Activated CD4-positive, alpha-beta T cell treated with anti-CD3 and anti-CD28 coated beads, Interleukin-2, amount 10 ng/mL, durations not matched to agents 24 days and 14 days (primary cell): ENCODE measurements at regions of chr5 and their contacts with region 1.

Region 1: GRCh38 chr5:56126487-56127179 is 106.5 kb downstream of the ANKRD55 start:
- DNase-seq: no peak
- H3K4me3 Mint-ChIP-seq: peak overlapping the region; percentile 72
- H3K27ac Mint-ChIP-seq: peak overlapping the region; percentile 93
- H3K4me1 Mint-ChIP-seq: peaks cover 47% of the 10 kb centered on the region
- H3K27me3 Mint-ChIP-seq: no peaks in the 10 kb centered on the region

Region 2: GRCh38 chr5:56105511-56106291 is 20.9 kb before region 1 on chr5:
- intact Hi-C with region 1: loop called (anchors 2 kb)
- DNase-seq: no peak
- H3K4me3 Mint-ChIP-seq: peak overlapping the region; percentile 59
- H3K27ac Mint-ChIP-seq: peak overlapping the region; percentile 74
- H3K4me1 Mint-ChIP-seq: peaks cover 45% of the 10 kb centered on the region
- H3K27me3 Mint-ChIP-seq: no peaks in the 10 kb centered on the region

Region 3: DNA sequence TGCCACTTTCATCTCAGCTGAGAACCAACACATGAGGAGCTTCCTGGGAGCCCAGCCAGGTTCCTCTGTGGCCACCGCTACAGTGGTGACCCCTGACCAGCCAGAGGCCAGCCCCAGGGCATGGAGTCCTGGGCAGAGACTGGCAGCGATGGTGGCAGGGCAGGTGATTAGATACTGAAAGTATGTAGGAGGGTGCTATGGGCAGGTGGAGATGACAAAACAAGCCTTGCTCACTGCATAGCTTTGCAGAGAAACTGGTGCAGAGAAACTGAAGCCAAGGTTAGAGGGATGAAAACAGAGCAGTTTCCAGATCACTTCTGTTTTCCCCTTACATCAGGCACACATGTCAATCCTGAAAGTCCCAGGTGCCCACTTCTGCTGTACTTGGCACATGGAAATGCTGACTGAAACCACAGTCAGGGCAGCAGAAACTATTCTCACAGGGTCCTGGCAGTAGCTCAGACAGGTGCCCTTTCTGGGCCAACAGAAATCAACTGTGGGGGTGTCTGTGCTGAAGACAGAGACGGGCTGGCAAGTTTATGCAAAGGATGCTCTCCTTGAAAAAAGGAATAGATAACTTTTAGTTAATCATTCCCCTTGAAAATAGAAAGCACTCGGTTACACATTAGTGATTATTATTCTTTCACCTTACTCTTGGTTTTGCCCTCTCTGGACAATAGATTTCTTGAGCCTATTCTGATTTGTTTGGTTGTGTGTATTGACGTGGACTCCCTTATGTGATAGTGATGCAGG is 16.2 kb after region 1 on chr5:
- intact Hi-C with region 1: loop called (anchors 1 kb)
- DNase-seq: peak; percentile 69
- H3K4me3 Mint-ChIP-seq: no peak overlapping the region
- H3K27ac Mint-ChIP-seq: peak overlapping the region; percentile 48
- H3K4me1 Mint-ChIP-seq: peaks cover 24% of the 10 kb centered on the region
- H3K27me3 Mint-ChIP-seq: no peaks in the 10 kb centered on the region

Region 4: GRCh38 chr5:56148453-56148971 is 21.9 kb after region 1 on chr5:
- intact Hi-C with region 1: loop called (anchors 2 kb)
- DNase-seq: peak; percentile 88
- H3K4me3 Mint-ChIP-seq: peak overlapping the region; percentile 21
- H3K27ac Mint-ChIP-seq: peak overlapping the region; percentile 83
- H3K4me1 Mint-ChIP-seq: peaks cover 38% of the 10 kb centered on the region
- H3K27me3 Mint-ChIP-seq: no peaks in the 10 kb centered on the region

Region 5: DNA sequence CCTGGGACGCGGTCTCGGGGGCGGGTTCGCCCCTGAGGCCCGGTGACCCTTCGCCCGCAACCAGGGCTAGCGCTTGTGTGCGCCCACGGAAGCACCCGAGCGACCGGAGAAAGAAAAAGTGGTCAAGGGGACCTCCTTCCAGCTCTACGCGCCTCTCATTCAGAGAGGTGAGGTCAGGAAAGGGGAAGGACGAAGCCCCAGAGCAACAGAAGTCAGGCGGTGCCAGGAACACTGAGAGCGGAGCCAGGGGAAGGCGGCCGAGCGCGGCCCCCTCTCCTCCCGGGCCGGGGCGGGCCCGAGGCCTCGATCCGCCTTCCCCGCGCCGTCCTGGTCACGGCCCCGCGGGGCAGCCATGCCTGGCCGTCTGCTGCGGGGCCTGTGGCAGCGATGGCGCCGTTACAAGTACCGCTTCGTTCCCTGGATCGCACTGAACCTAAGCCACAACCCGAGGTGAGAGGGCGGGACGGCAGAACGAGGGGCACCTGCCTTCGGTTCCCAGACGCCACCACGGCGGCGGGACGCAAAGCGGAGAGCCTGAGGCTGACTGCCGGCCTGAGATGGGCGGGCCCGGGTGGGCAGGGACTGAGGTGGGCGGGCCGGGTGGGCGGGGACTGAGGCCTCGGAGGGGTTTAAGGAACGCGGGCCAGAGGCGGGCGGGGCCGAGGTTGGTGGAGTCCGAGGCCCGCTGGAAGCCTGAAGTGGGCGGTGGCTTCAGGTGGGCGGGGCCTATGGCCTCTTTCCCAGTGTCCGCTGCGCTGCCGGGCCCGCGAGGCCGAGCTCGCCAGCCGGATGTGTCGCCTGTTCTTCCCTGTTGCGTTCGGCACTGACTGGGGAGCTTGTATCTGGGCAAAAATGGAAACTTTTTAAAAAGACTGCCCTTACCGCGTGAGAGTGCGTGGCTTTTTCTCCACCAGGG is 782.9 kb after region 1 on chr5 and contains the start of gene SETD9:
- intact Hi-C with region 1: no loop called
- DNase-seq: peak; percentile 98
- H3K4me3 Mint-ChIP-seq: peak within 1 kb of the TSS; percentile 92
- H3K27ac Mint-ChIP-seq: peak within 1 kb of the TSS; percentile 98
- H3K4me1 Mint-ChIP-seq: peaks cover 21% of the 10 kb centered on the region
- H3K27me3 Mint-ChIP-seq: peaks cover 18% of the 10 kb centered on the region
- total RNA-seq, gene SETD9: 15.9 and 17.0 TPM in 2 replicates